ENCODE measurements at regions of chr17 and their contacts with region 1.

Region 1: GRCh38 chr17:49407981-49408501 is 6.6 kb downstream of the PHB1 start:
- DNase-seq: peak; percentile 92
- ATAC-seq: peak; percentile 98
- H3K4me3 Mint-ChIP-seq: no peak overlapping the region
- H3K27ac Mint-ChIP-seq: peak overlapping the region; percentile 65
- H3K4me1 Mint-ChIP-seq: peaks cover 49% of the 10 kb centered on the region
- H3K27me3 Mint-ChIP-seq: no peaks in the 10 kb centered on the region
- CTCF ChIP-seq: peak; percentile 98

Region 2: GRCh38 chr17:49315551-49316257 is 92.3 kb before region 1 on chr17:
- CTCF ChIA-PET with region 1: interaction called, 16 read pairs
- POLR2A ChIA-PET with region 1: no interaction called
- intact Hi-C with region 1: no loop called
- DNase-seq: peak; percentile 89
- ATAC-seq: peak; percentile 100
- H3K4me3 Mint-ChIP-seq: peak overlapping the region; percentile 47
- H3K27ac Mint-ChIP-seq: peak overlapping the region; percentile 14
- H3K4me1 Mint-ChIP-seq: peaks cover 28% of the 10 kb centered on the region
- H3K27me3 Mint-ChIP-seq: no peaks in the 10 kb centered on the region
- CTCF ChIP-seq: peak; percentile 91

Region 3: DNA sequence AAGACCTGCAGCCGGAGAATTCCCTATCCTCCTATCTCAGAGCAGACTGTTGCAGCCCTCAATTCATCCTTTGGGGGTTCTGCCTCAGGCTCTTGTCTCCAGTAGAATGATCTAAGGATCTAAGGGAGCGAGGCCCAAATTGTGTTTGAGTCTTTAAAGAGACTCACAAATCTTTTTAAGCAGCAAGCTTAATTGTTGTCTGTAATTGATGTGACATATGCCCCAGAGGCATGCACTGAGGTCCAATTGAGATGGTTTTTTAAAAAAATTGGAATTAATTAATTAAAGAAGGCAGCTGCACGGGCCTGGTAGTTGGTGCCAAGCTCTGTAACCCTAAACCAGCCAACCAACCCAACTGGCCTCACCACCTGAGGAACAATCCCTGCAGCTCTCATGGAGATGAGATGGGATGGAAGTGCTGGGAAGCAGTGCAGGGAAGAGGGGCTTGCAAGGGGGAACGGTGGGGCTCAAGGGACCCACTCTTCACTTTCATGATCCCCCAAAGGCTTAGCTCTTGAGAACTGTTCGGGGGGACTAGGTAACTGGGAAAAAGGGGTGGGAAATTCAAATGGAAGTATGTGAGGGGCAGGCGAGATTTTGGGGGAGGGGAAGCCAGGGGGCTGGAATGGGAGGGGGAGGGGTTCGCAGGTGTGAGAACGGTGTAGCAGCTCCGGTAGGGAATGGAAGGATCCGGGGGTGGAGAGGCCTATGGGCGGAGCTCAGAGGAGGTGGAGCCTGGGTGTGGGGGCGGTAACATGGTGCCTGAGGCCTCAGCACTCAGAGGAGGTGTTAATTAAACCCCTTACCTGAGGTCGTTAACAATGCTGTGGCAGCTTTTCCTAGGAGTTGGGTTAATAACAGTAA is 36.8 kb before region 1 on chr17:
- CTCF ChIA-PET with region 1: interaction called, 11 read pairs
- POLR2A ChIA-PET with region 1: no interaction called
- intact Hi-C with region 1: no loop called
- DNase-seq: no peak
- ATAC-seq: no peak
- H3K4me3 Mint-ChIP-seq: no peak overlapping the region
- H3K27ac Mint-ChIP-seq: no peak overlapping the region
- H3K4me1 Mint-ChIP-seq: peaks cover 2% of the 10 kb centered on the region
- H3K27me3 Mint-ChIP-seq: no peaks in the 10 kb centered on the region
- CTCF ChIP-seq: no peak

Region 4: DNA sequence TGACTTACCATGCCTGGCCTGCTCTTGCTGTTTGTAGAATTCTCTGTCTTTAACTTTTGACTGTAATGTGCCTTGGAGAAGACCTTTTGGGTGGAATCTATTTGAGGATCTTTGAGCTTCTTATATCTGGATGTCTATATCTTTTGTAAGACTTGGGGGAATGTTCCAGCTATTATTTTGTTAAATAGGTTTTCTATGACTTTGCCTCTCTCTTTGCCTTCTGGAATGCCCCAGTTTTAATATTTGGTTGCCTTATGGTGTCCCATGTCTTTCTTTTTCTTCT is 16.9 kb after region 1 on chr17:
- CTCF ChIA-PET with region 1: interaction called, 10 read pairs
- POLR2A ChIA-PET with region 1: interaction called, 4 read pairs
- intact Hi-C with region 1: no loop called
- DNase-seq: no peak
- ATAC-seq: no peak
- H3K4me3 Mint-ChIP-seq: no peak overlapping the region
- H3K27ac Mint-ChIP-seq: no peak overlapping the region
- H3K4me1 Mint-ChIP-seq: no peaks in the 10 kb centered on the region
- H3K27me3 Mint-ChIP-seq: peaks cover 2% of the 10 kb centered on the region
- CTCF ChIP-seq: no peak

Region 5: DNA sequence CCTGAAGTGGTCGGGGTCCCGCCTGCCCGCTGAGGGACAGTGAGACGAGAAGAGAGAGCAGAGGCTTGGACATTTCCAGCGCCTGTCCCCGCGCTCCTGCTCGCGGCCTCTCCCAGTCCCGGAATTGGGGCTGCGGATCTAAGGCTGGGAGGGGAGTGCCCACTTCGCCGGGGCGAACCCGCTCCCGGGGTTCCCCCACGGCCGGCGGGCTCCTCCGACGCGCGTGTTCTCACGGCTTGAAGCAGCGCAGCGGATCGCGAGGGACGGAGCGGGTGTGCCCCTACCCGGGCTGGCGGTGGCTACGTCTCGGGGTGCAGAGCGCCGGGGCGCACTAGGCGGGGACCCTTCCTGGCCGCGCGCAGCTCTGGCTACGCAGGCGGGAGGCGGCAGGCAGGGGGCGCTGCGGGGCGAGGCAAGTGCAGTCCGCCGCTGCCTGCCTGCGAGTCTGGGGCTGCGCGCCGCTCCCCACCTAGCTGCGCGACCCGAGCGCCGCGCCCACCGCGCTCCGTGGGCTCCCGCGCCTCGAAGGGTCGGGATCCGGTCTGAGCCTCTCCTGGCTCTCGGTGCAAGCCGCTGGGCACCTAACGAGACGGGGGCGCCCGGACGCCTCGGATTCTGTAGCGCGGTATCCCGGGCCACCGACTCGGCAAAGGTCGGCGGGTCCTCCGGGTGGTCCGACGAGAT is 88.3 kb after region 1 on chr17:
- CTCF ChIA-PET with region 1: interaction called, 12 read pairs
- POLR2A ChIA-PET with region 1: no interaction called
- intact Hi-C with region 1: no loop called
- DNase-seq: peak; percentile 89
- ATAC-seq: peak; percentile 83
- H3K4me3 Mint-ChIP-seq: peak overlapping the region; percentile 63
- H3K27ac Mint-ChIP-seq: no peak overlapping the region
- H3K4me1 Mint-ChIP-seq: peaks cover 22% of the 10 kb centered on the region
- H3K27me3 Mint-ChIP-seq: peaks cover 59% of the 10 kb centered on the region
- CTCF ChIP-seq: peak; percentile 86